ENCODE measurements at regions of chr17 and their contacts with region 1.

Region 1: GRCh38 chr17:66415366-66416206 is 113.2 kb downstream of the PRKCA start:
- DNase-seq: peak in 1 of 9 experiments; percentile 46
- ATAC-seq: no peak
- H3K4me3 ChIP-seq: peak overlapping the region in 1 of 2 experiments; percentile 29
- H3K4me3 Mint-ChIP-seq: peak overlapping the region; percentile 61
- H3K27ac ChIP-seq: no peak overlapping the region
- H3K27ac Mint-ChIP-seq: peak overlapping the region; percentile 86
- H3K4me1 ChIP-seq: peaks cover 51% of the 10 kb centered on the region
- H3K4me1 Mint-ChIP-seq: peaks cover 62% of the 10 kb centered on the region
- H3K27me3 ChIP-seq: no peaks in the 10 kb centered on the region
- H3K27me3 Mint-ChIP-seq: no peaks in the 10 kb centered on the region
- CTCF ChIP-seq: no peak

Region 2: DNA sequence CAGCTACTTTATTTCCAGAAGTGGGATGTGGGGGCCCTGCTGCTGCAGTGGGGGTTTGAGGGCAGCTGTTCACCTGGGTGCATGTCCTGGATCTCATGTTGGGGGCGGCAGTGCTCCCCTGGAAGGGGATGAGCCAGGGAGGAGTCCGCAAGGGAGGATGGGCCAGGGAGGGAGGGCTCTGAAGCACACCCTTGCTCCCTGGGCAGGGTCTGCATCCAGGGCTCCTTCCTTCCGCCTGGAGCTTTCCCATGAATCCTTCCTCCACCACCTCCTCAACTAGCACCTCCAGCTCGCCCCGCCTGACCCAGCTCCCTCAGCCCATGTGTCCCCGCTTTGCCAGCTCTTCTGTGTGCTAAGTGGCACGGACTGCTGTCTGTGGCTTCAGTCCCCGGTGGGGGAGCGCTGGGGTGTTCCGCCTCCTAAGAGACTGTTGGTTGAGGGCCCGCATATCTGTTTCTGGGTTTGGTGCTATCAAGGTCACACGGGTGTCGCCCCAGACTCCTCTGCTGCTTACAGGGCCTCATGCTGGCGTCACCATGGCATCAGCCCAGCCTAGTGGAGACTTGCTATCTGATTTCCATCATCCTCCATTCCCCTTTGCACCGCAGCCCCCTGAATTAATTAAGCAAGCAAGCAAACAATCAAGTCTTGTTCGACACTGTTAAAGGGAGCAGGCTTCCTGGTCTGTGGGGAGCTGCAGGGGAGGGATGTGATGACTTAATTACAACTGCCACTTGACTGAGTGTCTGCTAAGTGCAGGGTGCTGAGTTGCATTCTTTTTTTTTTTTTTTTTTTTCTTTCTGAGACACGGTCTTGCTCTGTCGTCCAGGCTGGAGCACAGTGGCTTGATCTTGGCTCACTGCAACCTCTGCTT is 41.4 kb before region 1 on chr17:
- CTCF ChIA-PET with region 1: no interaction called
- POLR2A ChIA-PET with region 1: no interaction called
- intact Hi-C with region 1: loop called in 1 of 2 experiments (anchors 5 kb)
- DNase-seq: peak; percentile 46 to 85 (median 73)
- ATAC-seq: peak; percentile 90
- H3K4me3 ChIP-seq: no peak overlapping the region
- H3K4me3 Mint-ChIP-seq: peak overlapping the region; percentile 51
- H3K27ac ChIP-seq: peak overlapping the region; percentile 19 to 41
- H3K27ac Mint-ChIP-seq: peak overlapping the region; percentile 91
- H3K4me1 ChIP-seq: peaks cover 31% of the 10 kb centered on the region
- H3K4me1 Mint-ChIP-seq: peaks cover 62% of the 10 kb centered on the region
- H3K27me3 ChIP-seq: no peaks in the 10 kb centered on the region
- H3K27me3 Mint-ChIP-seq: no peaks in the 10 kb centered on the region
- CTCF ChIP-seq: no peak

Region 3: DNA sequence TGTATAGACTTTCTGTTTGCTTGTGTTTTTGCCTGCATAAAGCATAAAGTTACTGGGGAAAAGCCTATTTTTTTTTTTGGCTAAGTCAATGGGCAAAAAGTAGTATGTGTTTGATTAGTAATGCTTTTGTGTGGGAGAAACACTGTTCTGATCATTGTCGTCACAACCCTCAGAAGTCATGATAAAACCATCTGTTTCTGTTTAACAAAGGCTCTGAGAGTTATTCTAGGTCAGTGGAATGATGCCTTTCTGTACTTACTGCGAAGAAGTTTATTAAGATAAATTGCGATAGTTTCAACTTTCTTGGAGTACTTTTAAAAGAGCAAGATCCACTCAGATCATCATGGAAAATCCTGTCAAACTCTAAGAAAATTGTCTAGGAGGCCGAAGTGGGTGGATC is 32.3 kb before region 1 on chr17:
- CTCF ChIA-PET with region 1: no interaction called
- POLR2A ChIA-PET with region 1: interaction called, 3 read pairs
- intact Hi-C with region 1: loop called (anchors 5 kb)
- DNase-seq: no peak
- ATAC-seq: no peak
- H3K4me3 ChIP-seq: no peak overlapping the region
- H3K4me3 Mint-ChIP-seq: no peak overlapping the region
- H3K27ac ChIP-seq: no peak overlapping the region
- H3K27ac Mint-ChIP-seq: no peak overlapping the region
- H3K4me1 ChIP-seq: peaks cover 26% of the 10 kb centered on the region
- H3K4me1 Mint-ChIP-seq: peaks cover 69% of the 10 kb centered on the region
- H3K27me3 ChIP-seq: no peaks in the 10 kb centered on the region
- H3K27me3 Mint-ChIP-seq: no peaks in the 10 kb centered on the region
- CTCF ChIP-seq: no peak

Region 4: GRCh38 chr17:66437476-66438026 is 22.0 kb after region 1 on chr17:
- CTCF ChIA-PET with region 1: no interaction called
- POLR2A ChIA-PET with region 1: no interaction called
- intact Hi-C with region 1: no loop called
- DNase-seq: no peak
- ATAC-seq: no peak
- H3K4me3 ChIP-seq: no peak overlapping the region
- H3K4me3 Mint-ChIP-seq: peak overlapping the region; percentile 26
- H3K27ac ChIP-seq: no peak overlapping the region
- H3K27ac Mint-ChIP-seq: no peak overlapping the region
- H3K4me1 ChIP-seq: peaks cover 41% of the 10 kb centered on the region
- H3K4me1 Mint-ChIP-seq: peaks cover 32% of the 10 kb centered on the region
- H3K27me3 ChIP-seq: no peaks in the 10 kb centered on the region
- H3K27me3 Mint-ChIP-seq: no peaks in the 10 kb centered on the region
- CTCF ChIP-seq: no peak

Region 5: DNA sequence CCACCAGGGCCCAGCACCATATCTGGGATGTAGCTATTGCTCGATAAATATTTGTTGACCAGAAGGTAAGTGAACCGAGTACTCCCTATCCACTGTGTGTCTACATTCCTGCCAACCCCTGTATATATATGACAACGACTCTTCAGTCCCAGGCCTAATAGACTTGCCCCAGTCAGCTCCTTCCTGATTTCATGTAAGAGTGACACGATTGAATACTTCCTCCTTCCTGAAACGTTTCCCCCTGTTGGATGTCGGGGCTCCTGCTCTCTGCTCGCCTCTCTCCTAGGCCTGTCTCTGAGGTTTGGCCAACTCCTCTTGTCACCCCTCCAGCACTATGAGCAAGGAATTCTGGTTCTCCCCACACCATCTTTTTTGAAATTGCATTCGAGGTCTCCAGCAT is 65.7 kb after region 1 on chr17:
- CTCF ChIA-PET with region 1: no interaction called
- POLR2A ChIA-PET with region 1: no interaction called
- intact Hi-C with region 1: no loop called
- DNase-seq: no peak
- ATAC-seq: no peak
- H3K4me3 ChIP-seq: no peak overlapping the region
- H3K4me3 Mint-ChIP-seq: no peak overlapping the region
- H3K27ac ChIP-seq: no peak overlapping the region
- H3K27ac Mint-ChIP-seq: peak overlapping the region; percentile 12
- H3K4me1 ChIP-seq: no peaks in the 10 kb centered on the region
- H3K4me1 Mint-ChIP-seq: peaks cover 34% of the 10 kb centered on the region
- H3K27me3 ChIP-seq: no peaks in the 10 kb centered on the region
- H3K27me3 Mint-ChIP-seq: no peaks in the 10 kb centered on the region
- CTCF ChIP-seq: no peak

Measured in CD8-positive, alpha-beta T cell (primary cell).